ENCODE measurements at regions of chr19 and their contacts with region 1.

Region 1: GRCh38 chr19:7680606-7681339 is at the start of gene TRAPPC5:
- DNase-seq: peak; percentile 84
- H3K4me3 Mint-ChIP-seq: peak within 1 kb of the TSS; percentile 90
- H3K27ac Mint-ChIP-seq: peak within 1 kb of the TSS; percentile 93
- H3K4me1 Mint-ChIP-seq: peaks cover 39% of the 10 kb centered on the region
- H3K27me3 Mint-ChIP-seq: peaks cover 24% of the 10 kb centered on the region
- total RNA-seq, gene TRAPPC5: 88.9 and 92.4 TPM in 2 replicates

Region 2: GRCh38 chr19:7562646-7563393 is 118.0 kb before region 1 on chr19:
- intact Hi-C with region 1: loop called (anchors 1 kb)
- DNase-seq: no peak
- H3K4me3 Mint-ChIP-seq: no peak overlapping the region
- H3K27ac Mint-ChIP-seq: no peak overlapping the region
- H3K4me1 Mint-ChIP-seq: no peaks in the 10 kb centered on the region
- H3K27me3 Mint-ChIP-seq: no peaks in the 10 kb centered on the region

Region 3: GRCh38 chr19:7629347-7630054 is 51.3 kb before region 1 on chr19 and contains the starts of genes PET100 and XAB2:
- intact Hi-C with region 1: loop called (anchors 2 kb)
- DNase-seq: peak; percentile 94
- H3K4me3 Mint-ChIP-seq: peak within 1 kb of the TSS; percentile 98
- H3K27ac Mint-ChIP-seq: peak within 1 kb of the TSS; percentile 98
- H3K4me1 Mint-ChIP-seq: peaks cover 24% of the 10 kb centered on the region
- H3K27me3 Mint-ChIP-seq: no peaks in the 10 kb centered on the region
- total RNA-seq, gene PET100: 95.7 and 113 TPM in 2 replicates
- total RNA-seq, gene XAB2: 43.0 and 44.3 TPM in 2 replicates

Region 4: DNA sequence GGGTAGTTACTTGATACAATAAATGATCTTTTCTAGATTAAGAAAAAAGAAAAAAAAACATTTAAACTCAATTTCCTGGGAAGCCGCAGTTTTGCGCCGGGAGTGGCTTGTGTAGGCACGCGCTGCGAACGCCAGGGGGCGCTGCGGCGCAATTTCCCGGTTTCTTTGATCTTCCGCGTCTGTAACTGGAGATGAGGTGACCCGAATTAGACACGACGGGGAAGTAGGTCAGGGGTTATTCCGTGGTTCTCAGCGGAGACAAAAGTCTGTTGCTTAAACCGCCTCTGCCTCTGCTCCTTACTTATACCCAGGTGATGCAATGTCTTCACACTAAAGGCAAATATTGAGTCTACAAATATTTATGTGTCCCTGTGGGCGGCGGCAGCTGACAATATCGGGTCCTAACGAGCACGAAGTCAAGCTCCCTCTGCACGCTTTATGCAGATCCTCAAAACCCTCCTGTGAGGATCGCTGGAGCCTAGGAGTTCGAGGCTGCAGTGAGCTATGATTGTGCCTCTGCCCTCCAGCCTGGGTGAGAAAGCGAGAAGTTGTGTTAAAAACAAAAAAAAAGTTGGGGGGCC is 28.6 kb before region 1 on chr19:
- intact Hi-C with region 1: loop called (anchors 1 kb)
- DNase-seq: peak; percentile 79
- H3K4me3 Mint-ChIP-seq: peak overlapping the region; percentile 52
- H3K27ac Mint-ChIP-seq: peak overlapping the region; percentile 72
- H3K4me1 Mint-ChIP-seq: peaks cover 12% of the 10 kb centered on the region
- H3K27me3 Mint-ChIP-seq: peaks cover 3% of the 10 kb centered on the region

Region 5: DNA sequence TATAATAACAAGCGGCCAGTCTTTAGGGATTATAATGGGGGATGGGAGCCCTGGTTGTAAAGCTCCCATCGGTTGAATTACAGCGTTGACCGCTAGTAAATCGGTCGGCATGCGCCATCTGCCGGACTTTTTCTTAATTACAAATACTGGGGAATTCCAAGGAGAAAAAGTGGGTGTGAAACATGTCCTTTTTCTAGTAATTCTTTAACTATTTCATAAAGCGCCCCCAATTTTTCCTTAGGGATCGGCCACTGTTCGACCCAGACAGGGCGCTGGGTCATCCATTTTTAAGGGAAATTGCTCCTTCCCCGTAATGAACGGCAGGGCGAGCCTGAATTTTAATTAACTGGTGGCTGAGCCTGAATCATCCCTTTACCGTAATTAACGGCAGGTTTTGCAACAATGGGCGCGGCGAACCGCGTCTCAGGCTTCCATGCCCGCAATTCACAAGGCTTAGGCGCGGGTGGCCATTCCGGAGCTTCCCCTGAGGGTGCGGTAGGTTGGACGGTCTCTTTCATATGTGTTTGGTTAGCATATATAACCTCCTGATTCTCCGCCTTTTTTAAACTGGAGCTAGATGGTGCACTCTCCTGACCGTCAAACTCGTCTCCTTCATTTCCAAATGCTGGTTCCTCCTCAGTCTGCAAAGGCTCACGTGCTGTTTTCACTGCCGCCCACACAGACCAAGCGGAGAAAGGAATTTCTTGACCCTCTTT is 119.0 kb after region 1 on chr19:
- intact Hi-C with region 1: loop called (anchors 1 kb)
- DNase-seq: peak; percentile 35
- H3K4me3 Mint-ChIP-seq: no peak overlapping the region
- H3K27ac Mint-ChIP-seq: no peak overlapping the region
- H3K4me1 Mint-ChIP-seq: no peaks in the 10 kb centered on the region
- H3K27me3 Mint-ChIP-seq: peaks cover 55% of the 10 kb centered on the region

Measured in activated T-helper 2 cell treated with anti-CD3 and anti-CD28 coated beads, Interferon-gamma antibody, Interleukin-2, Interleukin-4, amounts not matched to agents 10 μg/mL and 5 μg/mL and 100 μg/mL, durations not matched to agents 14 hours and 24 hours and 36 hours (primary cell).